Caki2 (cell line): ENCODE measurements at regions of chr19 and their contacts with region 1.

Region 1: DNA sequence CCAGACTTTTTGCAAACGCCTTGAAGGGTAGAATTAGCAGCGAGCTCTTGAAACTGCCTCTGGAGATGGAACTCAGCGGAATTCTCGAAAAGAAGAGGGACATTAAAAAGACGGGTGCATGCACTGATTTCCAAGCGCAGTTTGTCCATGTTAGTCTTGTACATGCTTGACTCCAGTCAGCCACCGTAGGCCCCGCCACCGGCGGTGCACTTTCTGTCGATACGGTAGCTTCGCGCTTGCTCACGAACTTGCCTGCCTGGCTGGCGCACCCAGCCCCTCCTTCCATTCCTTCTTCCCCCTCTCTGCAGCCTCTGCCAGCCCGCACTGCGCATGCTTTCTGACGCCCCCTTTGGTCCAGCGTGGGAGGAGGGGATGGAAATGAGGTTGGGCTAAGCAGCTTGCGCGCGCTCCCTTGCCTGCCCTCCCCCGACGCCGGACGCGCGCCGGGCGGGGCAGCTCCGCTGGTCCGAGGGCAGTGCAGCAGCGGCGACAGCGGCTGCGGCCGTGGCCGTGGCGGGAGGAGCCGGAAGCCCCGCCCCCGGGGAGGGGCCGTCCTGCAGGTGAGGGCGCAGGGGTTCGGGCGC is at the start of gene ZNF575:
- DNase-seq: peak; percentile 100
- total RNA-seq, gene ZNF575: not detected in 2 replicates

Region 2: DNA sequence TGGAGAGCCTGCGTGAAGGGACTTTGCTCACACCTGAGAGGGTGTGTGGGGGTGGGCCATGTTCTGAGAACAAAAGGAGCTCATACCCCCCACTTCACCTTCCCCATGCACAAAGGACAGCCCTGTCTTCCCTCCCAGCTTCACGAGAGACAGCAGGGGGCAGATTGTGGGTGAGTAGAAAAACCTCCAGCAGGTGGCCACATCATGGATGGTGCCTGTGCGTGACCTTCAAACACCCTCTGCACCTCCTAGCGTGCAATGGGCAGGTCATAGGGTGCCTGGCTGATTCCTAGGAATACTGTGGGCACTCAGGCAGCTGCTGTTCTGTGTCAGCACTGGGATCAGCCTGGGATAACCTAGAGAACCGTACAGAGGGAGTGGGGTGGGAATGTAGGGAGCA is 227.4 kb before region 1 on chr19:
- in situ Hi-C with region 1: no loop called
- DNase-seq: no peak

Region 3: DNA sequence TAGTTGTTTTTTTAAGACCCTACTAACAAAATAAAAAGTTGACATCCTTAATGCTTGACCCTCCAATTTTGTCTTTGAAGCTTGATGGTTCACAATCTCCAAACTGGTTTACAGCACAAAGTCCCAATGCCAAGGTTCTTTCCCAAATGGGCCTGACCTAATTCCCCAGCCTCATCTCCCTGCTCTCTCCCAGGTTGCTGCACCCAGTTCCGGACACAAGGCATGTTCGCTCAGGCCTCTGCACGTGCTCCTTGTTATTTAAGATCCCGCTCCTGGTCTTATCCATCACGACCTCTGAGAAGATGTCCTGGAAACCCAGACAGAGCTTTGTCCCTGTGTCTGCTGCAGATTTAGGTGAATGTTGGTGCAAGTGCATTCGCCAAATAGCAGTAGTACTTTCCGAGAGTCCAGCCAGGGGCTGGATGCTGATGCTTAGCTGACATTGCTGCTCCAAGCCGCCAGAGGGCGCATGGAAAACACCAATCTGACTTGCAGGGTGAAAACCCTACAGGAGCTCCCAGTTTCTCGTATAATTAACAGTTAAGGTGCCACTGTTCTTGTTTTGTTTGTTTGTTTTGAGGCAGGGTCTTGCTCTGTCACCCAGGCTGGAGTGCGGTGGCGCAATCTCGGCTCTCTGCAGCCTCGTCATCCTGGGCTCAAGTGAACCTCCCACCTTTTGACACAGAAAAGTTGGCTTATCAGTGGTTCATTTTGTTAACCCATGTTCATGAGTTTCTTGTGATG is 86.1 kb before region 1 on chr19:
- in situ Hi-C with region 1: loop called (anchors 25 kb)
- DNase-seq: peak; percentile 69

Region 4: DNA sequence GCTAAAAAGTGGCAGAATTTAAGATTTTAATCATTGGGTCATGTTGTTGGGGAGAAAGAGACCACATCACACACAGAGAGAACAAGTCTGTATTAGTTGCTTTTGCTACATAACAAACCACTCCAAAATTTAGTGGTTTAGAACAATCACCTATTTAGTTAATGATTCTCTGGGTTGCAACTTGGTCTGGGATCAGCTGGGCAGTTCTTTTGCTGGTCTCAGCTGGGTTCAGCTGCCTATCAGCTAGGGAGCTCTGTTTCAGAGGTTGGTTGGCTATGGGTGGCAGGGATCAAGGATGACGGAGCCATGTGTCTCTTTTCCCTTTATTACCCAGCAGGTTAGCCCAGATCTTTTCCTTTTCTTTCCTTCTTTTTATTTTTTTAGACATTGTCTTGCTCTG is 51.4 kb after region 1 on chr19:
- in situ Hi-C with region 1: no loop called
- DNase-seq: no peak

Region 5: GRCh38 chr19:43700395-43701000 is 167.4 kb after region 1 on chr19:
- in situ Hi-C with region 1: no loop called
- DNase-seq: no peak